Activated B cell treated with CpG ODN at 0.5 μM for 24 hours (primary cell): ENCODE measurements at regions of chr1 and their contacts with region 1.

Region 1: DNA sequence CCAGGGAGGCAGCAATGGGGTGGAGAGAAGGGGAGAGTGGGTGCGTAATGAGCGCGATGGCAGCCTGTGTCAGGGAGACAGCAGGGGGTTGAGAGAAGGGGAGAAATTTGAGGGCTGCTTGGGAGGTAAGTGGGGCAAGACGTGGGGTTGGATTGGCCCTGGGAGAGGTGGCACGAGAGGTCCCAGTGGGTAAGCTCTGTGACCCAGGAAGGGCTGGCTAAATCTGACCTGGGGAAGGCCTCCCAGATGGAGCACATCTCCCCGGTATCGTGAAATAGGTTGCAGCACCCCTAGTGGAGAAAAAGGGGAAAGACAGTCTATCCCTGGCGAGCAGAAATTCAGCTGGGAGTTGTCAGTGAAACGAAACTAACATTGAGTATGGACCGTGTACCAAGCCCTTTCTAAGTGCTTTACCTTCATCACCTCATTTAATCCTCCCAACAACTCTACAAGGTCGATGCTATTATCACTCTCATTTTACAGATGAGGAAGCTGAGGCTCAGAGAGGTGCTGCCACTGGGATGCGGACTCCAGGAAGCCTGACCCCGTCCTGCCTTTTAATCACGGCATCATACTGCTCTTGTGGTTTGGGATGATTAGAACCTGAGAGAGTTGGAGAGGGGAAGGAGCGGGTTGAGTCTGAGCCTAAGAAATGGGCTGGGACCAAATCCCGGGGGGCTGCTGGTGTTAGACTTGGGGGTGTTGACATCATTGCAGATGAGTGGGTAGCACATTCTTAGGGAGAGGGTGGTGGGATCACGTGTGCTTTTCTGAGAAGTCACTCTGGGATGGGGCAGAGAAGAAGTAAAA is 56.6 kb upstream of the RPL11 start:
- DNase-seq: peak; percentile 45
- ATAC-seq: peak; percentile 87
- H3K4me3 Mint-ChIP-seq: peak overlapping the region; percentile 67
- H3K27ac Mint-ChIP-seq: peak overlapping the region; percentile 92
- H3K4me1 Mint-ChIP-seq: peaks cover 51% of the 10 kb centered on the region
- H3K27me3 Mint-ChIP-seq: no peaks in the 10 kb centered on the region
- CTCF ChIP-seq: peak; percentile 69

Region 2: DNA sequence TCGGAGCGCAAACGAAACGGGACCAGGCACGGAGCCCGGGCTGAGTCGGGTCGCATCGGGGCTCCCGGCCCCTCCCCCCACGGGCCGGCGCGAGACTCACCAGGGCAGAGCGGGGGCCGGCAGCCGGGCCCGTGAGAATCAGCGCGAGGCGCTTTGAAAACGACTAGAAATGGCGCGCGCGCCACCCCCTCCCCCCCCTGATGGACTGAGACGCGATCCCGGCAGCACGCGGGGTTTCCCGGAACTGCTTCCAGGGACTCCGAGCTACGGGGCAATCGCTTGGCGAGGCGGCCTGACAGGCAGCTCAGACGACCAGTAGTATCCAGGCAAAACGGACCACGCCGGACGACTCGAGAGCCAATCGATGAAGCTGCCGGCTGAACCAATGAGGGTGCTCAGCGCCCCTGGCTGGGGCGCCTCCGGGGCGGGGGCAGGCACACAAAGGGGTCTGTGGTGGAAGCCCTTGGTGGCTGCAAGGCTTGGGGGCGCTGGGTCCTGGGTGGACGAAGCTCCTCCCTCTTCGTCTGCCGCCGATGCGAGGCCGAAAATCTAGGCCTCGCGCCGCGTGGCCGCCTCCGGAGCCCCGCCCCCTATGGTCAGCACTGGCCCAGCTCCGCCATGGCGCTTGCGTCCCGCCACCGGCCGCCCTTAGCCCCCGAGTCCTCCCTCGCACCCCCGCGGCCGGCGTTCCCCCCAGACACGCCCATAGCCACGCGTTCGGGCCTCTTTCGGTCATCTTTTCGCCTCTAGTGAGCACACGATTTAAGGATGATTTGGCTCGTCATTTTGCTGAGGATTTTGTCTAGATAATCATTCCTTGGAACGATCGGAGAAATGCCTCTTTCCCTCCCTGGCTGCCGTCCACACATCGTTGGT is 290.7 kb before region 1 on chr1 and contains the start of gene HNRNPR:
- CTCF ChIA-PET with region 1: no interaction called
- POLR2A ChIA-PET with region 1: interaction called, 3 read pairs
- intact Hi-C with region 1: loop called (anchors 10 kb)
- DNase-seq: peak; percentile 89
- ATAC-seq: peak; percentile 96
- H3K4me3 Mint-ChIP-seq: peak within 1 kb of the TSS; percentile 92
- H3K27ac Mint-ChIP-seq: peak within 1 kb of the TSS; percentile 92
- H3K4me1 Mint-ChIP-seq: peaks cover 48% of the 10 kb centered on the region
- H3K27me3 Mint-ChIP-seq: no peaks in the 10 kb centered on the region
- CTCF ChIP-seq: no peak
- total RNA-seq, gene HNRNPR: 171 and 172 TPM in 2 replicates

Region 3: DNA sequence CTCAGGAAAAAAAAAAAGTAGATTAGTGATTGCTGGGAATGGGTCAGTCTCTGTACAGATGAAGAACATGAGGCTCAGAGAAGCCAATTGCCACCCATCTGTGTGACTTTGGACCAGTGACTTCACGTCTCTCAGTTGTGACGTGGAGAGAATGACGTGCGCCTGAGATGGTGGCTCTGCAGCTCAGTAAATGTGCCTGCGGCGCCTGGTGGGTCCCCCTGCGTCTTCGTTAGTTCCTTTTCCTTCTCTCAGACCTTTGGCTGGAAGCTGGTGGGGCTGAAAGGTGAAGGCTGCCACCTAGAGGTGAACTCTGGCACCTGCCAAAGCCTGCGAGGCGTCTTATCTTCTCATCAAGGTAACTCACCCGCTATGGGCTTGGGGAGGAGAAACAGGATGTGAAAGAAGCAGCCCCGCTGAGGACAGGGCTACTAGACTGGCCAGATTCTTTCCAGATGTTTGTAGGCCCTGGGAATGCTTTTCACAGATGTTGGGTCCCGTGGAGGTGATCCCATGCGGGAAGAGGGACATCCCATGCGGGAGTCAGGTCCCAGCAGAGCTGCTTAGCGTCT is 95.3 kb before region 1 on chr1:
- CTCF ChIA-PET with region 1: interaction called, 872 read pairs
- POLR2A ChIA-PET with region 1: interaction called, 66 read pairs
- intact Hi-C with region 1: loop called (anchors 1 kb)
- DNase-seq: peak; percentile 84
- ATAC-seq: peak; percentile 92
- H3K4me3 Mint-ChIP-seq: peak overlapping the region; percentile 59
- H3K27ac Mint-ChIP-seq: peak overlapping the region; percentile 56
- H3K4me1 Mint-ChIP-seq: peaks cover 39% of the 10 kb centered on the region
- H3K27me3 Mint-ChIP-seq: no peaks in the 10 kb centered on the region
- CTCF ChIP-seq: peak; percentile 60

Region 4: DNA sequence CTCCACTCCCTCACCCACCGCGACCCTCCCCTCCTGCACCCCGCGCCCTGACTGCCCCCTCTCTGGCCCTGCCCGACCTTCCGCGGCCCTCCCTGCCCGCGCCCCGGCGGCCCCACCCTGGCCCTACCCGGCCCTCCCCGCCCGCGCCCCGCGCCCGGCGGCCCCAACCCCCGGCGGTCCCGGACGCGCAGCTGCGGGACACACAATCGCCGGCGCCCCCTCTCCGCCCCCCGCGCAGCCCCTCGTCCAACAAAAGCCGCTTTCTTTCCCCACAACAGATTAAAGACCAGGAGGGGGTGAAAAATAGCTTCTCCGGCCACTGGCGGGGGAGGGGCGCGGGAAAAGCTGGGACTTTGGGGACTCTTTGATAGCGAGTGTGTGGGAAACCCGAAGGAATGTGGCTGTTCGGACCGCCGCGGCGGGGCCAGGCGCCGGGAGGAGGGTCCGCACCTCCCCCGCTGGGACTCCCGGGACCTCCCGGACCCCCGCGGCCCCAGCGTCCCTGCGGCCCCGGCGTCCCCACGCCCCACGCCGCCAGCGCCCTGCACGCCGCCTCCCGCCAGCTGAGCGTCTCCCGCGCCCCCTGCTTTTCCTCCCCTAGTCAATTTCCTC is 66.9 kb before region 1 on chr1:
- CTCF ChIA-PET with region 1: interaction called, 872 read pairs
- POLR2A ChIA-PET with region 1: interaction called, 11 read pairs
- intact Hi-C with region 1: no loop called
- DNase-seq: no peak
- ATAC-seq: peak; percentile 29
- H3K4me3 Mint-ChIP-seq: peak overlapping the region; percentile 93
- H3K27ac Mint-ChIP-seq: peak overlapping the region; percentile 92
- H3K4me1 Mint-ChIP-seq: peaks cover 61% of the 10 kb centered on the region
- H3K27me3 Mint-ChIP-seq: no peaks in the 10 kb centered on the region
- CTCF ChIP-seq: no peak

Region 5: GRCh38 chr1:23591460-23592208 is 43.4 kb before region 1 on chr1:
- CTCF ChIA-PET with region 1: interaction called, 46 read pairs
- POLR2A ChIA-PET with region 1: interaction called, 61 read pairs
- intact Hi-C with region 1: loop called (anchors 1 kb)
- DNase-seq: peak; percentile 67
- ATAC-seq: peak; percentile 80
- H3K4me3 Mint-ChIP-seq: peak overlapping the region; percentile 74
- H3K27ac Mint-ChIP-seq: peak overlapping the region; percentile 89
- H3K4me1 Mint-ChIP-seq: peaks cover 87% of the 10 kb centered on the region
- H3K27me3 Mint-ChIP-seq: no peaks in the 10 kb centered on the region
- CTCF ChIP-seq: no peak

Region 6: DNA sequence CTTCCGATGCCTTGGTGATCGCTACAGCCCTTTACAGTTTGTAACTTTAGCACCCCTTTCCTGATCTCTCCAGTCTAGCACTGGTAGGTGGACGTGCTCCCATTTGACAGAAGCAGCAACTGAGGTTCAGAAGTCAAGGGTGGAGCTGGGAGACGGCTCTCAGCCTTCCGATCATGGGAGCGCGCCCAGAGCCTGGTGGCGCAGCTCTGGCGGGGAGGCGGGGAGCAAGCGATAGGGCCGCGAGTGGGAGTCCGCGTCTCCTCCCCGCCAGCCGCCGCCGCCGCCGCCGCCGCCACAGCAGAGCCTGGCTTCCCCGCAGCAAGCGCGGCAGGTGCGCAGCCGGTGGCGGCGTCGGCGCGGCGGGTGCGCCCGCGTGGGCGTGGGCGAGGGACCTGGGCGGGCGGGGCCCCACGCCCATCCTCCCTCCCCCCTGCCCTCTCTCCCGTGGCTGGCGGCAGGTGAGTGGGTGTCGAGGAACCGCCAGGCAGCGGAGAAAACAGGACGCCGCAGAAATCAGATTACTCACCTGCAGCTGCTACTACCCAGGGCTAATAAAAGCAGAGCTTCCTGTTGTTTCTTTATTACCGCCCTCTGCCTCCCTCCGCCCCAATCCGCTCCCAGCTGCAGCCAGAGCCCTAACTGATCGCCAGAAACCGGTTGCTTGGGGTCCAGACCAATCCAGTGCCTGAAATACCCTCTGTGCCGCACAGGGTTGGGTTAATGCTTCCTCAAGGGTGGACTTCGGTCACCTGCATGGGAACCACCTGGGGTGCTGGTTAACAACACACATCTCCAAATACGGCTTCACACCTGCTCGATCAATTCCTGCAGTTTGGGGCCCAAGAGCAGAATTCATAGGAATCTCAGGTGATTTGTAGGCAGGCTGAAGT is 15.5 kb before region 1 on chr1:
- CTCF ChIA-PET with region 1: interaction called, 31 read pairs
- POLR2A ChIA-PET with region 1: interaction called, 19 read pairs
- intact Hi-C with region 1: loop called (anchors 1 kb)
- DNase-seq: peak; percentile 75
- ATAC-seq: peak; percentile 81
- H3K4me3 Mint-ChIP-seq: peak overlapping the region; percentile 81
- H3K27ac Mint-ChIP-seq: peak overlapping the region; percentile 91
- H3K4me1 Mint-ChIP-seq: peaks cover 92% of the 10 kb centered on the region
- H3K27me3 Mint-ChIP-seq: no peaks in the 10 kb centered on the region
- CTCF ChIP-seq: no peak

Region 7: GRCh38 chr1:23691499-23692307 is 56.7 kb after region 1 on chr1 and contains the start of gene RPL11:
- CTCF ChIA-PET with region 1: interaction called, 4 read pairs
- POLR2A ChIA-PET with region 1: interaction called, 10 read pairs
- intact Hi-C with region 1: no loop called
- DNase-seq: peak; percentile 73
- ATAC-seq: peak; percentile 99
- H3K4me3 Mint-ChIP-seq: peak within 1 kb of the TSS; percentile 98
- H3K27ac Mint-ChIP-seq: peak within 1 kb of the TSS; percentile 93
- H3K4me1 Mint-ChIP-seq: peaks cover 46% of the 10 kb centered on the region
- H3K27me3 Mint-ChIP-seq: no peaks in the 10 kb centered on the region
- CTCF ChIP-seq: peak; percentile 39
- total RNA-seq, gene RPL11: 1,956 and 2,021 TPM in 2 replicates